Right ventricle myocardium inferior (tissue), 1 donor: ENCODE measurements at regions of chr4 and their contacts with region 1.

Region 1: GRCh38 chr4:104490770-104491480 is 3.8 kb downstream of the CXXC4 start:
- DNase-seq: peak; percentile 82
- ATAC-seq: peak; percentile 32

Region 2: DNA sequence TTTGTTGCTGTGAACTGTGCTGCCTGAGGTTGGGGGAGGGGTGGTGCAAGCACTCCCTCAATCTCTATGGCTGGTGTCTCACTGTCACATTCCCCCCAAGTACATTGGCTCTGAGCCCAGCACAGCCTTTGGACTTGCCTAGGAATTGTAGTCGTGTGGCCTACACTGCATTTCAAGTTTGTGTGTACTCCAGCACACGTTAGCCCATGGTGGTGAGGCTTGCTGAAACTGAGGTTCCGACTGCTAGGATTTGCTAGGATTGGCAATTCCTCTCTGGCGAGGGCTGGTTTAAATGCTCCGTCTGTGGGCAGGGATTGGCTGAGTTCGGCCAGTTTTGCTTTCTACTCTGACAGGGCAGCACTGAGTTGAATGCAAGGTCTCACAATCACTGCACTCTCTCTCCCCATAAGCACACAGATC is 125.5 kb after region 1 on chr4:
- intact Hi-C with region 1: loop called (anchors 10 kb)
- DNase-seq: peak; percentile 72
- ATAC-seq: peak; percentile 94

Region 3: DNA sequence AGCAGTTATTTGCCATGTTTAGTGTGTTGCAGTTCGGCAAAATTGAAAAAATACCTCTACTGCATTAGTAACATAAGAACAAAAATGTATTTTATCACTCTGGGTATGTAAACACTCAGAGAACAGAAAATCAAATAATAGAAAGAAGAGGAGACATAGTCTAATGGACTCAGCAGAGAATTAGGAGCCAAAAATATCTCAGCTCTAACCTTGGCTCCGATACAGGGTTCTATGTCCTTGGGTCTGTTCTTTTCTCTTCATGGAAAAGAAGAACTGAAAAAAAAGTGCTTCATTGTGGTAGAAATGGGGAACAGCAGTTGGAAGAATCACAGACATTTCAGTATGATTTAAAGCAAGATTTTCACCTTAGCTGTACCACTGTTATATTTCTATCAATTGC is 244.2 kb after region 1 on chr4:
- intact Hi-C with region 1: loop called (anchors 10 kb)
- DNase-seq: no peak
- ATAC-seq: peak; percentile 48

Region 4: DNA sequence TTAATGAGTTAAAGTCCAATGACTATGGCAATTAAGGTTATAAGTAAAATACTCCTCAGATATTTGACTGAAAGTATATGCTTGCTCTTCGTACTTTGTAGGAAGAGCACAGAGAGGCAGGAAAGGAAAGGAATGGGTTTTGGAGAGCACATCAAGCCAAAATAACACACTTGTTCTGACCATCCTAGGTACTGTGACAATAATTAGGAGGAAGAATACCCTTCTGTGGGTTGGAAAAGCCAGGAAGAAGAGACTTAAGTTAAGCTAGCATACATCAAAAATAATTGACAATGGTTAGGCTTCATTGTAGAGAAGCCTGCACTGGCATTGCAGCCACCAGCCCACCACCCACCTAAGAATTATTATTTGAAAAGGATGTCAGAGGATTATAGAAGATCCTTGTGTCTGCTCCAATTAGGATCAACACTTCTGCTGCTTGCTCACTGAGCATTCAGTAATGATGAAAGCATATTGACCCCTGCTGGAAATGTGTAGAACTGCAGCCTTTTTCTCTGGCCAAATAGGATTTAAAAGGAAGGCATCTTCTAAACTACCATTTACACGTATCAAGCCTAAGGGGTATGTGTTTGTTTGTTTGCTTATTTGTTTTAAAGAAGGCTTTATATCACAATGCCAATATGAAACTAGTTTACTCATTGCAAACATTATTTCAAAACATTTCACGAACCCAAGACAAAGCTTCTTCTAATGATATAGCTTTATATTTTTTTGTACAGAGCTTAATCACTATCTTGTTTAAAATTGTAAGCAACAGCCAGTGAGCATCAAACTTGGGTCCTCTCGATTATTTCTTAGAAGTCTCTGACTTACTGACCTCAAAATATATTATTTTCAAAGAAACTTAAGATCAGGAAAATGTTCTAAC is 369.6 kb after region 1 on chr4:
- intact Hi-C with region 1: no loop called
- DNase-seq: no peak
- ATAC-seq: peak; percentile 79